Activated naive CD4-positive, alpha-beta T cell treated with anti-CD3 and anti-CD28 coated beads for 36 hours (primary cell): ENCODE measurements at regions of chr2 and their contacts with region 1.

Region 1: GRCh38 chr2:67840460-67841068 is 222.2 kb downstream of the C1D start:
- DNase-seq: peak; percentile 58
- H3K4me3 Mint-ChIP-seq: no peak overlapping the region
- H3K27ac Mint-ChIP-seq: no peak overlapping the region
- H3K4me1 Mint-ChIP-seq: no peaks in the 10 kb centered on the region
- H3K27me3 Mint-ChIP-seq: peaks cover 4% of the 10 kb centered on the region

Region 2: DNA sequence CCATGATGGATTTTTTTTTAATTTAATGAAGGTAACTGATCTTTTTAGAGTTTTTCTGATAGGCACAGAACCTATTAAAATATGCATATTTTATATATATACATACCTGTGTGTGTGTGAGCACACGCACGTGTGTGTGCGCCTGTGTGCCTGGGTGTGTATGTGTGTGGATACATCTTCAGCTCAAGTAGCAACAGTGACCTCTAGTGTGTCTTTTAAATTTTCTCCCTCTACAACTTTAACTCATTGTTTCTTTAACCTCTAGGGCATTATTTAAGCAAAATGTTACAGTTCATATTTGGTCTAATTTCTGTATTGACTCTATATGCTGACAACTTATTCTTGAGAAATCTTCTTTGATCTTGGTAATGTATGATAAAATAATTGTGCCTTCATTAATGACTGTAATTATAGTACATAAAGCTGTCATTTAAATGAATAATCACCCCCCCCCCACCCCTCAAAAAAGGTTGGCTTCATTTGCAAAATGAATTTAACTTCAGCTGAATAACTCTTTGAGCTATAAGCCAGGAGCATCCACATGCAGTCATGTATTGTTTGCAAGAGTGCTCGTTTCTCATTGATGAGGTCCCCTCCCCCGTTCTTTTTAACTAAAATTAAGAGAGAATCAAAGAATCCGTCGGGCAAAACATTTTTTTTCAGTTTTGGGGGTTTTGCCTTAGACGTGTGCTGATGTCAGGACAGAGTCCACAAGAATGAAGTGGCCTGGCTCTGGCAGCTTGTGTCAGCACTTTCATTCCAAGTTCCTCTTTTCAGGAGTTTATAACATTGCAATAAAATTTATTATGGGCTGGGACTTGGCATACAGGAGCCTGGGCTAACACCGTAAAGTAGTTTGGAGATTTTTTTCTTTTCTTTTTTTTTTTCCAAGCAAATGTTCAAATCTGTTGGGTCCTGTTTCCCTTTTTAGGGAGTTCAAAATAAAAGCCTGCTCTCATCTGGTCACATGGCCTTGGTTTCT is 363.5 kb before region 1 on chr2:
- CTCF ChIA-PET with region 1: no interaction called
- intact Hi-C with region 1: loop called (anchors 10 kb)
- DNase-seq: no peak
- H3K4me3 Mint-ChIP-seq: no peak overlapping the region
- H3K27ac Mint-ChIP-seq: no peak overlapping the region
- H3K4me1 Mint-ChIP-seq: no peaks in the 10 kb centered on the region
- H3K27me3 Mint-ChIP-seq: peaks cover 34% of the 10 kb centered on the region

Region 3: DNA sequence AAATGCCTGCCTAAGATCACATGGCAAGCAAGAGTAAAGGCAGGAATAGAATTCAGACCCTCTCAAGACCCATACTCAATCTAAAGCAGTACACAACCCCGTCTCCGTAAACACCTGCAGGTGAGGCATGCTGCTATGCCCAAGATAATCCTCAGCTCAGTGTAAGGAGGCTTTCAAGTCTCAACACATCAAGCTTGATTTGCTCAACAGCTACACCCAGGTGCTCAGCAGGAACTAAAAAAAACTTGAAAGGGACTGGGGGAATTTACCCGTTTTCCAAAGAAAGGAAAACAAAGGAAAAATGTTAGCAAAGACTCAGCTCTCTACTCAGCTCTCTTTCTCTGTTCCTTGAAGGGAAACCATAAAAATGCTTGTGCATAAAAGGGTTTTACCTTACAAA is 79.6 kb before region 1 on chr2:
- CTCF ChIA-PET with region 1: no interaction called
- intact Hi-C with region 1: no loop called
- DNase-seq: no peak
- H3K4me3 Mint-ChIP-seq: no peak overlapping the region
- H3K27ac Mint-ChIP-seq: no peak overlapping the region
- H3K4me1 Mint-ChIP-seq: no peaks in the 10 kb centered on the region
- H3K27me3 Mint-ChIP-seq: peaks cover 9% of the 10 kb centered on the region

Region 4: DNA sequence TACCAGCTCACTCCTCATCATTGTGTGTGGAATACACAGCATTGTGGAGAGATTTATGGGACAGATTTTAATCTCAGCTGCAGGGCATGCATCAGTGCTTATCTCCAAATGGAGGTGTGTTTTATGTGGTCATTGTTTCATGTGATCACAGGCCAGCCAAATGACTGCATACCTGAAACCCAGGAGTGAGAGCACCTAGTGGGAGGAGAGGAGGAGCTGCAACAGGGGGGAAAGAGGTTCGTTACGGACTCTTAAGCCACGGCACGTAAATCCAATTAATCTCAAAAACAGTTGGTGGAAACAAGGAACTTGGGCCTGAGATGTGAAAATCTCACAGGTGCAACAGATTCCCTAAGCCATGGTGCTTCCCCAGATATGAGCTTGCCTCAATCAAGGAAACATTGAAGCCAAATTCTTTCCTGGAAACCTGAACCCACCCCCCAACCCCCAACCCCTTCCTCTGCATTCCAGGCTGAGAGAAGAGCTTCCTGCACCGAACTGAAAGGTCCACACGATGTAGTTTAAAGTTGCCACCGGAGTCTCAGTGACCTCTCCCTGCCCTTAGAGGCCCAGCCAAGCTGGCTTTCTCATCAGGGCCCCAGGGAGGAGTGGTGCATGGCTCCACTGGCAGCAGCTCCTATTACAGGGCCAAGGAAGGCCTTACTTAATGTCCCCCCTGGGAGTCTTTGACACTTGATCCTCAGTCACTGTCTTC is 54.8 kb after region 1 on chr2:
- CTCF ChIA-PET with region 1: no interaction called
- intact Hi-C with region 1: no loop called
- DNase-seq: no peak
- H3K4me3 Mint-ChIP-seq: no peak overlapping the region
- H3K27ac Mint-ChIP-seq: no peak overlapping the region
- H3K4me1 Mint-ChIP-seq: no peaks in the 10 kb centered on the region
- H3K27me3 Mint-ChIP-seq: peaks cover 9% of the 10 kb centered on the region